ENCODE measurements at regions of chr11 and their contacts with region 1.

Region 1: GRCh38 chr11:68528630-68529029 is 68.1 kb downstream of the PPP6R3 start:
- DNase-seq: peak in 6 of 14 experiments; percentile 10 to 59 (median 32)
- ATAC-seq: peak; percentile 87
- H3K4me3 ChIP-seq: no peak overlapping the region
- H3K4me3 Mint-ChIP-seq: peak overlapping the region; percentile 21
- H3K27ac ChIP-seq: no peak overlapping the region
- H3K27ac Mint-ChIP-seq: peak overlapping the region; percentile 72
- H3K4me1 ChIP-seq: peaks cover 31% of the 10 kb centered on the region
- H3K4me1 Mint-ChIP-seq: peaks cover 90% of the 10 kb centered on the region
- H3K27me3 ChIP-seq: no peaks in the 10 kb centered on the region
- H3K27me3 Mint-ChIP-seq: no peaks in the 10 kb centered on the region
- CTCF ChIP-seq: no peak

Region 2: GRCh38 chr11:68488623-68489022 is 40.0 kb before region 1 on chr11:
- CTCF ChIA-PET with region 1: interaction called, 3 read pairs
- POLR2A ChIA-PET with region 1: no interaction called
- intact Hi-C with region 1: loop called in 1 of 2 experiments (anchors 5 kb)
- DNase-seq: no peak
- ATAC-seq: no peak
- H3K4me3 ChIP-seq: no peak overlapping the region
- H3K4me3 Mint-ChIP-seq: peak overlapping the region; percentile 1
- H3K27ac ChIP-seq: no peak overlapping the region
- H3K27ac Mint-ChIP-seq: peak overlapping the region; percentile 40
- H3K4me1 ChIP-seq: peaks cover 41% of the 10 kb centered on the region
- H3K4me1 Mint-ChIP-seq: peaks cover 88% of the 10 kb centered on the region
- H3K27me3 ChIP-seq: no peaks in the 10 kb centered on the region
- H3K27me3 Mint-ChIP-seq: no peaks in the 10 kb centered on the region
- CTCF ChIP-seq: no peak

Region 3: DNA sequence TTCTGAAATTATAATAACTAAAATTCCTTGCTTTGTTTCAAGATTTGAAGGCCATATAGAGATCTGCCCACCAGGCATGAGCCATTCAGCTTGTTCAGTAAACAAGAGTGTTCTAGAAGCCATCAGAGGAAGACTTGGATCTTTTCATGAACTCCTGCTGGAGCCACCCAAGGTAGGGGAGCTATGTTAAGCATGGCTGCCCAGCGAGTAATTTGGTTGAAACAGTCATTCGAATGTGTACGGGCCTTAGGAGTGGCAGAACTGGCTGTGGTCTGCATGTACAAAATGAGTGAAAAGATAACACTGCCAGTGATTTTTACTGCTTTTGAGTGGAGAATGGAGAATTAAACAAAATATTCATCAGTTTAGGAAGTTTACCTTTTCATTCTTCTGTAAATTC is 35.6 kb after region 1 on chr11:
- CTCF ChIA-PET with region 1: no interaction called
- POLR2A ChIA-PET with region 1: no interaction called
- intact Hi-C with region 1: no loop called
- DNase-seq: no peak
- ATAC-seq: no peak
- H3K4me3 ChIP-seq: no peak overlapping the region
- H3K4me3 Mint-ChIP-seq: no peak overlapping the region
- H3K27ac ChIP-seq: no peak overlapping the region
- H3K27ac Mint-ChIP-seq: no peak overlapping the region
- H3K4me1 ChIP-seq: no peaks in the 10 kb centered on the region
- H3K4me1 Mint-ChIP-seq: peaks cover 32% of the 10 kb centered on the region
- H3K27me3 ChIP-seq: no peaks in the 10 kb centered on the region
- H3K27me3 Mint-ChIP-seq: no peaks in the 10 kb centered on the region
- CTCF ChIP-seq: no peak

Region 4: GRCh38 chr11:68643585-68643984 is 115.0 kb after region 1 on chr11:
- CTCF ChIA-PET with region 1: no interaction called
- POLR2A ChIA-PET with region 1: no interaction called
- intact Hi-C with region 1: no loop called
- DNase-seq: no peak
- ATAC-seq: no peak
- H3K4me3 ChIP-seq: no peak overlapping the region
- H3K4me3 Mint-ChIP-seq: no peak overlapping the region
- H3K27ac ChIP-seq: no peak overlapping the region
- H3K27ac Mint-ChIP-seq: no peak overlapping the region
- H3K4me1 ChIP-seq: no peaks in the 10 kb centered on the region
- H3K4me1 Mint-ChIP-seq: no peaks in the 10 kb centered on the region
- H3K27me3 ChIP-seq: peaks cover 0 to 4% of the 10 kb centered on the region in 2 experiments
- H3K27me3 Mint-ChIP-seq: peaks cover 14% of the 10 kb centered on the region
- CTCF ChIP-seq: no peak

Region 5: GRCh38 chr11:69101115-69101791 is 572.6 kb after region 1 on chr11:
- CTCF ChIA-PET with region 1: no interaction called
- POLR2A ChIA-PET with region 1: no interaction called
- intact Hi-C with region 1: no loop called
- DNase-seq: peak; percentile 56 to 88 (median 72)
- ATAC-seq: peak; percentile 99
- H3K4me3 ChIP-seq: no peak overlapping the region
- H3K4me3 Mint-ChIP-seq: no peak overlapping the region
- H3K27ac ChIP-seq: no peak overlapping the region
- H3K27ac Mint-ChIP-seq: no peak overlapping the region
- H3K4me1 ChIP-seq: peaks cover 7% of the 10 kb centered on the region
- H3K4me1 Mint-ChIP-seq: peaks cover 4% of the 10 kb centered on the region
- H3K27me3 ChIP-seq: peaks cover 0 to 6% of the 10 kb centered on the region in 2 experiments
- H3K27me3 Mint-ChIP-seq: no peaks in the 10 kb centered on the region
- CTCF ChIP-seq: peak; percentile 95

Measured in CD4-positive, alpha-beta T cell (primary cell).